ENCODE measurements at regions of chr17 and their contacts with region 1.

Region 1: DNA sequence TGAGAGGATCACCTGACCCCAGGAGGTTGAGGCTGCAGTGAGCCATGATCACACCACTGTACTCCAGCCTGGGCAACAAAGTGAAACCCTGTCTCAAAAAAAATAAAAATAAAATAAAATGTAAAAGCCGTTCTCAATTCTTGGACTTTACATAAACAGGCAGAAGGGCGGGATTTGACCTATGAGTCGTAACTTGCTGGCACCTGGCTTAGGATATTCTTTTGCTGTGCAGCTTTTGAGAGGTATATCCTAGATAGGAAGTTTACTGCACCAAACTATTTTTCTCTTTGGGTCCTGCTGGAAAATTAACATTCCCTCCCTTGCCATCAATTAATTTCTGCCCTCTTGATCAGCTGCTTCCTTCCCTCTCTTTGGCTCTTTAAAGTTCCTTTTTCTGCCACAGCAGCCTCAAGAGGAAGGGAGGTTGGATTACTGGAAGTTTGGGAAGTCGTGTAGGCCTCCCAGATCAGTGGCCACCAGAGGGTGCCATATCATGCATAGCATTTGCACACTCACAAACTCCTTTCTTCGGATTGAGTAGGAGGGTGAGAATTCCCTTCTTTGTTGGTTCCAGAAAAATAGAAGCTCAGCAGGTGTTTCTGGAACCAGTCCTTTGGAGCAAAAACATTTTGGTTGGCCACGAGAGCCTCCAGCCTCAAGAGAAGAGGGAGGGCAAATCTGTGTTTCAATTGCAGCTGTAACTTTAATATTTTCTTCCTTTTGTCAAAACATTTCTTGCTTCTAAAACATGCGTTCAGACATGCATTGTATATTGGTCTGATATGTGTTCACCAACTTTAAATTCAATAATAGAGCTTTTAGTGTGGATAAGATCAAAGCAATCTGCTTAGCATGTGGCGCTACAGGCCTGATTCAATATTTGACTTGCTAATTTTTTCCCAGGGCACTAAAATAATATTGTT is 147.3 kb downstream of the CCDC182 start:
- DNase-seq: peak; percentile 85
- ATAC-seq: peak; percentile 90
- H3K4me3 ChIP-seq: no peak overlapping the region
- H3K27ac ChIP-seq: peak overlapping the region; percentile 38; the same call in 1 of the 2 replicates
- H3K4me1 ChIP-seq: peaks cover 6% of the 10 kb centered on the region
- H3K27me3 ChIP-seq: no peaks in the 10 kb centered on the region
- CTCF ChIP-seq: peak; percentile 98

Region 2: GRCh38 chr17:57662644-57663308 is 65.0 kb after region 1 on chr17:
- CTCF ChIA-PET with region 1: no interaction called
- POLR2A ChIA-PET with region 1: no interaction called
- intact Hi-C with region 1: loop called (anchors 2 kb)
- DNase-seq: peak; percentile 100
- ATAC-seq: peak; percentile 98
- H3K4me3 ChIP-seq: peak overlapping the region; percentile 44
- H3K27ac ChIP-seq: peak overlapping the region; percentile 83
- H3K4me1 ChIP-seq: peaks cover 20% of the 10 kb centered on the region
- H3K27me3 ChIP-seq: no peaks in the 10 kb centered on the region
- CTCF ChIP-seq: peak; percentile 24; the same call in 1 of the 2 replicates

Region 3: DNA sequence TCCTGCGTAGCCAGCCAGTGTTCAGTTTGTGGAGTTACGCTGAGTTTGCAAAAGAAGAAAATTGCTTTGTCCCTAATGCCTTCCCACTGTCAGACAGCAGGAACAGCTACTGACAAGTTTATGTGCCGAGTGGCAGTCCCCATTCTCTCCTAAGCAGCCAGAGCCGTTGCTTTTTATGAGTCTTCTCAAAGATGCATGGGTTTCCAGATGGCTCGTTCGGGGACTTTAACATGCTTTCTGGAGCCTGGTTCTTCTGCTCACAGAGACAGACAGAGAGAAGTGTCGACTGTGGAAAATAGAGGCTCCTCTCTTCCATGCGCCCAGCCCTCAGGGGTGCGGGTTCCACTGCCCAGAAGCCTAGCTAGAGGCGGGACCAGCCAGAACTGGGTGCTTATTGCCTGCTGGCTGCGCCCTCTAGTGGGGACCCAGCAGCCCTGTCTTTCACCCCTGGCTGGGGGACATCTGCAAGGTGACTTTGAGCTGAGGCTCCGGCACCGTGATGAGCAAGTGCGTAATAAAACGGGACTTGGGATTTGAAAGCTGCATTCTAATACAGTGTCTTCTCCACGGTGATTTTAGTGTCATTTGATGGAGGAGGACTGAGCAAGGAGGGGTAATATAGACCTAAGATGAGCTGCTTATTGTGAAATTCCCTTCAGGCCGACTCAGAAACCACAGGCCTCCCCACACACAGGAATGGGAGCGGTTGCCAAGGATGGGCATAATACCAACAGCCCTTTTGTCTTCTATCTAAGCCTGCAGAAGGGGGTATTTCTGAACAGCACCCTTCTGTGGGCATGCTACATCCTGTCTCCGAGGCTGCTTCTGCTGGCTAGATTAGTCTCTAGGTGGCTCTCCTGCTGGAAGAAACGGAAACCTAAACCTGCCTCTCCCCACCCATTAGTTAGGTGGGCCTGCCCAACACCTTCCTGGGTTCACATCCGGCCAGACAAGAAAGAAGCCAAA is 74.2 kb after region 1 on chr17:
- CTCF ChIA-PET with region 1: interaction called, 33 read pairs
- POLR2A ChIA-PET with region 1: no interaction called
- intact Hi-C with region 1: loop called (anchors 1 kb)
- DNase-seq: peak; percentile 81
- ATAC-seq: peak; percentile 99
- H3K4me3 ChIP-seq: no peak overlapping the region
- H3K27ac ChIP-seq: no peak overlapping the region
- H3K4me1 ChIP-seq: peaks cover 4% of the 10 kb centered on the region; the same call in 1 of the 2 replicates
- H3K27me3 ChIP-seq: no peaks in the 10 kb centered on the region
- CTCF ChIP-seq: peak; percentile 100

Region 4: DNA sequence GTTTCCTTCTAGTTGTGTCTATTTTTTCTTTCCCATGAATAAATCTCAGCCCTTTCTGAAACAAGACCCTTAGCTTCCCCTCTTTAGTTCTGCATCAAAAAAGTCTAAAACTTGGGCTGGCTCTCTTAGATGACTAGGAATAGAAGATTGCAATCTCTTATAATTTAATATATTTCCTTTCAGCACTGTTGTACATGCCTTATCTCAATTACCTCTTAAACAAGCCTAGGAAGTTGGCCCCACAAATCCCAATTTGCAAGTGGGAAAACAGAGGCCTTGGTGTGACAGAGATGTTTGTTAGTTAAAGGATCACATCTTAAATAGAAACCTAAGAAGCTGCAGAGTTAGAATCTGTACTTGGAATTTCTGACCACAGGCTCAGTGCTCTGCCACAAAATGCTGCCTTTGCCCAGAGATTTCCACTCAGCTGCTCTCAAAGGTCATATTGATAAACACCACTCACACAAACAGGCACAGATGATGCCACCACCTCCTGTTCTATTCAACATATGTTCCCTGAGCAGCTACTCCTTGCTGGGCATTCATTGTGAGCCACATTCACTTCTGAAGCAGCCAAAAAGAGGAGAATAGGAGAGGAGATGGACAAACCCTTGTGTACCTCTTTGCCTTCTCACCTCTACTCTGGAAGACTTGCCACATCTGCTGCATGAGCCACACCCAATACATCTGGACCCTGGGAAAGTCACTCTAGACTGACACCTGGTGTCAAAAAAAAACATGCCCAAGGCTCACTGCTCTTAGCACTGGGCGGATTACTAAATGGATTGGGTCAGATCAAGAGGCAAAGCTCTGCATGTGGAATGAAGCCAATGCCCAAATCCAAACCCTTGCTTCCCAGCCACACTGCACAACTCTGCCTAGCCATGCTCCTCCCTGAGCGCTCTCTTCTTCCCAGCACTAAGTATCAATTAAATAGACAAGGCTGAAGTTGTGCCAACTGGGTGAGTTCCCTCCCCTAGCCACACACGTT is 141.9 kb after region 1 on chr17:
- CTCF ChIA-PET with region 1: interaction called, 5 read pairs
- POLR2A ChIA-PET with region 1: no interaction called
- intact Hi-C with region 1: loop called (anchors 1 kb)
- DNase-seq: peak; percentile 75
- ATAC-seq: peak; percentile 82
- H3K4me3 ChIP-seq: no peak overlapping the region
- H3K27ac ChIP-seq: no peak overlapping the region
- H3K4me1 ChIP-seq: no peaks in the 10 kb centered on the region
- H3K27me3 ChIP-seq: peaks cover 37% of the 10 kb centered on the region
- CTCF ChIP-seq: peak; percentile 85

Measured in PC-3 (cell line).